Dendritic cell treated with granulocyte-macrophage colony-stimulating factor and Interleukin-4, amounts not matched to agents 40 ng/mL and 50 ng/mL, for 4 days (primary cell): ENCODE measurements at regions of chr1 and their contacts with region 1.

Region 1: GRCh38 chr1:117045644-117046043 is 14.5 kb upstream of the TTF2 start:
- H3K4me3 Mint-ChIP-seq: no peak overlapping the region
- H3K27ac Mint-ChIP-seq: no peak overlapping the region
- H3K4me1 Mint-ChIP-seq: peaks cover 35% of the 10 kb centered on the region
- H3K27me3 Mint-ChIP-seq: peaks cover 2% of the 10 kb centered on the region

Region 2: DNA sequence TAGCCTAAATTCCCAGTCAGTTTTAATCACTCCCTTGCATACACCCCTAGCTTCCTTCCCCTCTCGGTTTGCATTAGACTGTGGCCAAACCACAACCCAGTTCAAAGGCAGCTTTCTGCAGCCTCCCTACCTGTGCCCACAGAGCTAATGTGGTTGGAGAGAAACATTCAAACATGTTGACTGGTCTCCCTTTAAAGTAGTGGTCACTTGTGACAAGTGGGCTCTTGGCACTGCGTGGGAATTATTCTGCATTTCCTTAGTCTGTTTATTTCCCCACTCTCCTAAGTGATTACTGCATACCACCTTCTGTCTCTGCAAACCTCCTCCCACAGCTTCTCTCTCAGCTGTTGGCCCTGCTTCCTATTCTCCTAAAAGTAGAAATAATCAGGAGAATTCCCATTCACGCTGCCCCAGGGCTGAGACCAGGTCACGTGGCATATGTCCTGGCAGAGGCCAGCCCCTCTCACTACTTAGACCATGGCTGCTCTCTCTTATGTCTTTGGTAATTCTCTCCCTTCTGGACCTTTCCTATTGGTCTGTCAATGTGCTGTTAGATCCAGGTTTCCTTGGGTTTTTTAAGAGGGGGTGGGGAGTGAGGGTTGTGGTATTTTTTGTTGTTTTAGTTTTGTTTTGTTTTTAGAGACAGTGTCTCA is 82.5 kb before region 1 on chr1:
- intact Hi-C with region 1: loop called (anchors 10 kb)
- H3K4me3 Mint-ChIP-seq: no peak overlapping the region
- H3K27ac Mint-ChIP-seq: no peak overlapping the region
- H3K4me1 Mint-ChIP-seq: peaks cover 23% of the 10 kb centered on the region
- H3K27me3 Mint-ChIP-seq: peaks cover 3% of the 10 kb centered on the region

Region 3: DNA sequence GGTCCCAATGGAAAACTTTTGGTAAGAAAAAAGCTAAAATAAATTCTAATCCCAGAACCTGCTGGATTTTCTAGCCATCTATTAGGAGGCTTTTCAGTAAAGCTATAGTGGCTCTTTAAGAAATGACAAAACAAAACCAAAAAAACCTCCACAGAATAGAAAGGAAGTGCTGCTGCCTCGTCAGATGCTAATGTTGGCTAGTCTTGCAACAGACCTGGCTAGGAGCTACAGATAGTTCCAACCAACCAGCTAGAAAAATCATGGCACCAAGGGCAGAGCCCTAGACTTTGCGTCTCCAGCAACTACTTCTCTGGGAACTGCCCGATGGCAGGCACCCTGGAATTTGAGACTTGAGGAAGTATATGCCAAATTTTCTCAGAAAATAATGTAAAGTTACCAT is 36.5 kb before region 1 on chr1:
- intact Hi-C with region 1: loop called (anchors 5 kb)
- H3K4me3 Mint-ChIP-seq: no peak overlapping the region
- H3K27ac Mint-ChIP-seq: peak overlapping the region; percentile 37
- H3K4me1 Mint-ChIP-seq: peaks cover 41% of the 10 kb centered on the region
- H3K27me3 Mint-ChIP-seq: no peaks in the 10 kb centered on the region

Region 4: DNA sequence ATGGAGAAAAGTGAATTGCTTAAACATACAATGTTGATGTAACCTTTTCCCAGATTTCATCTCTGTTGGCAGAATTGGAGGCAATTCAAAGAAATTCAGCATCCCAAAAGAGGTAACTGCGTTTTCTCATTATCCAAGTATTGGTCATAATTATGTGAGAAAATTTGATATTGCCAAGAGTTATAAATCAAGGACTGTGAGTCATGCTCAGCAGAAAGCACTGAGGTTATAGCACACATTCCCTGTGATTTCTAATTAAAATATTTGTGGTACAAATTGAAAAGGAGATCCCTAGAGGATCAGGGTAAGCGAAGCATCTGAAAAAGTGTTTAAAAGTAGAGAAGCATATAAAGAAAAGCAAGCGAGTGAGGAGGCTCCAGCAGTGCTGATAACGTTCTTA is 49.6 kb after region 1 on chr1:
- intact Hi-C with region 1: no loop called
- H3K4me3 Mint-ChIP-seq: no peak overlapping the region
- H3K27ac Mint-ChIP-seq: no peak overlapping the region
- H3K4me1 Mint-ChIP-seq: no peaks in the 10 kb centered on the region
- H3K27me3 Mint-ChIP-seq: no peaks in the 10 kb centered on the region